B cell (primary cell): ENCODE measurements at regions of chr7 and their contacts with region 1.

Region 1: GRCh38 chr7:45890902-45891461 is 2.7 kb downstream of the IGFBP1 start:
- DNase-seq: peak; percentile 52
- ATAC-seq: no peak
- H3K4me3 ChIP-seq: no peak overlapping the region
- H3K4me3 Mint-ChIP-seq: no peak overlapping the region
- H3K27ac ChIP-seq: no peak overlapping the region
- H3K27ac Mint-ChIP-seq: no peak overlapping the region
- H3K4me1 ChIP-seq: no peaks in the 10 kb centered on the region
- H3K4me1 Mint-ChIP-seq: peaks cover 2% of the 10 kb centered on the region
- H3K27me3 ChIP-seq: peaks cover 0 to 43% (median 21%) of the 10 kb centered on the region in 4 experiments
- H3K27me3 Mint-ChIP-seq: peaks cover 70% of the 10 kb centered on the region
- CTCF ChIP-seq: peak; percentile 81

Region 2: DNA sequence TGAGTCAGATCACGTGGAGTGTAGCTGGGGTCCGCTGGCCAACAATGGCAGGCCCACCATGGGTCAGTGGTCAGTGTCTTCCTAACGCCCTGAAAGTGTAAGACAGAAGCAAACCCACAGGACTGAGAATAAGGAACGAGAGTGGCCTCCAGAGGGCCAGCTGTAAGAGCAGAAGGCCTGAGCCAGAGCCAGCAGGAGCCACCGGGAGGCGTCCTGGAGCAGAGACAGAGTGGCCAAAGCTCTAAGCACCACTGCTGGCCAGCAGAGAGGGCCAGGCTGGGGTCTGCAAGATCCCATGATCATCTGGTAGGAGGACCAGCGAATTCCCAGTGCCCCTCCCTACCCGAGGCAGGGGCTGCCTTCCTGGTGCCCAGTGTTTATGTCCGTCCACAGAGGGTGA is 27.3 kb before region 1 on chr7:
- CTCF ChIA-PET with region 1: no interaction called
- POLR2A ChIA-PET with region 1: no interaction called
- intact Hi-C with region 1: no loop called
- DNase-seq: no peak
- ATAC-seq: no peak
- H3K4me3 ChIP-seq: no peak overlapping the region
- H3K4me3 Mint-ChIP-seq: no peak overlapping the region
- H3K27ac ChIP-seq: no peak overlapping the region
- H3K27ac Mint-ChIP-seq: no peak overlapping the region
- H3K4me1 ChIP-seq: no peaks in the 10 kb centered on the region
- H3K4me1 Mint-ChIP-seq: no peaks in the 10 kb centered on the region
- H3K27me3 ChIP-seq: peaks cover 0 to 9% (median 2%) of the 10 kb centered on the region in 4 experiments
- H3K27me3 Mint-ChIP-seq: peaks cover 25% of the 10 kb centered on the region
- CTCF ChIP-seq: no peak

Region 3: DNA sequence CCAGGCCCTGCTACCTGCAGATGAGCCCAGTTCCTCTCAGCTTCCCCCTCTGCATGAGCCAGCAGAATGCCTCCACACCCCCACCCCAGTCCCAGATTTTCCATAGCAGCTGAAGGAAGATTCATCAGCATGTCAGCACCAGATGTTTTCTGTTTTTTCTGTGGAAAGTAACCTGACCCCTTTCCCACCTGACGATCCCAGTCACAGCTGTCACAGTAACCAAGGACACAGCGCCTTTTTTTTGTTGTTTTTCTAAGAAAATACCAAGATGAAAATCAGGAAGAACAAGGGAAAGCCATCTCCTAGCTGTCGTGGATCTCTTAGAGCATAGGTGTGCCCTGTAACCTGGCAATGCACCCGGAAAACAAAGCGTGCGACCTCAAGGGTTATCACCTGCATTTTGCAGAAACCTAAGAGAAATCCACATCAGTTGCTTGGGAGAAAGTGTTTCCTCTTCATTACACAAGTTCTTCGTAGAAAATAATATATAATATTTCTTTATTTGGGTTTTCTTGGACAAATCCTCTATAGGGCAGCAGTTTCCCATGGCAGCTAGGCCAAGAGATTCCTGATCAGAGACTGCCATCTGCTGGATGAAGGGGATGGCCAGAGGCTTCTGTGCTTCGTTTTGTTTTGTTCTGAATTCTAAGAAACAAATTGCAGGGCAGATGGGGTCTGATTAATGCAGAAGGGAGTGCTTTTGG is 1289.0 kb after region 1 on chr7:
- CTCF ChIA-PET with region 1: interaction called, 12 read pairs
- POLR2A ChIA-PET with region 1: no interaction called
- intact Hi-C with region 1: no loop called
- DNase-seq: peak; percentile 68
- ATAC-seq: no peak
- H3K4me3 ChIP-seq: no peak overlapping the region
- H3K4me3 Mint-ChIP-seq: no peak overlapping the region
- H3K27ac ChIP-seq: no peak overlapping the region
- H3K27ac Mint-ChIP-seq: no peak overlapping the region
- H3K4me1 ChIP-seq: peaks cover 0 to 8% of the 10 kb centered on the region in 2 donors
- H3K4me1 Mint-ChIP-seq: peaks cover 8% of the 10 kb centered on the region
- H3K27me3 ChIP-seq: peaks cover 0 to 2% (median 0%) of the 10 kb centered on the region in 4 experiments
- H3K27me3 Mint-ChIP-seq: peaks cover 17% of the 10 kb centered on the region
- CTCF ChIP-seq: peak; percentile 75